Lower leg skin (tissue), 4 donors: ENCODE measurements at regions of chr6 and their contacts with region 1.

Region 1: DNA sequence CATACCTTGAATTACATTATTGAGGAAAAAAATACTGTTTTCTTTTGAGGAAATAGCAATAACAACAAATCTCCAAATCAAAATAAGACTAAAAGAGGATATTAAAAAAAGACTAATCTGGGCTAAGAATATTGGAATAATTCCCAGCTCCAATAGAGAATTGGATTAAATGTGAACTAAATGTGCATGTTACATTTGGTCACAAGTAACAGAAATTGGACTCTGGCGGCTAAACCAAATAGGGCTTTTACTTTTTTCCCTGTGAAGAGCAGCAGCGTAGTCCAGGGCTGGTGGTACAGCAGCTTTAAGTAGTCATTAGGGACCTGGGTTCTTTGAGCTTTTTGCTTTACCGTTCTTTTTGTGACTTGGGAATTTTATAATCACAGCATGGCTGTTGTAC is 71.9 kb downstream of the ELOVL2 start:
- DNase-seq: no peak
- H3K4me3 ChIP-seq: no peak overlapping the region
- CTCF ChIP-seq: no peak
- POLR2A ChIP-seq: no peak

Region 2: DNA sequence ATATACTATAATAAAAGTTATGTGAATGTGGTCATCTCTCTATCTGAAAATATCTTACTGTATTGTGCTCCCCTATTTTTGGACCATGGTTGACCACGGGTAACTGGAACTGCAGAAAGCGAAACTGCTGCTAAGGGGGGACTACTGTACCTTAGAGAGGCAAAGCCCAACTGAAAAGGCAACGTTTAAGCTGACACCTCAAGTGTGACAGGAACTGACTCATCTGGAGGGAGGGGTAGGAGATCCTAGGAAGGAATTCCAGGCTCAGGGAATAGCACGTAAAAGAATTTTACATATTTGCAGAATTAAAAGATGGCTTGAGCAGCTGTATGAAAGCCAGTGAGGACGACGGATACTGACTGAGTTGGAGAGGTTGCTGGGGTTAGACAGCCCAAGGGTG is 37.2 kb after region 1 on chr6:
- intact Hi-C with region 1: loop called (anchors 2 kb)
- DNase-seq: no peak
- H3K4me3 ChIP-seq: no peak overlapping the region
- CTCF ChIP-seq: no peak
- POLR2A ChIP-seq: no peak

Region 3: GRCh38 chr6:11128608-11129007 is 156.4 kb after region 1 on chr6:
- intact Hi-C with region 1: no loop called
- DNase-seq: no peak
- H3K4me3 ChIP-seq: no peak overlapping the region
- CTCF ChIP-seq: no peak
- POLR2A ChIP-seq: no peak